H1 (cell line): ENCODE measurements at regions of chr13 and their contacts with region 1.

Region 1: GRCh38 chr13:43908156-43909131 is 28.7 kb downstream of the LACC1 start:
- DNase-seq: no peak
- H3K4me3 ChIP-seq: no peak overlapping the region
- H3K27ac ChIP-seq: no peak overlapping the region
- H3K4me1 ChIP-seq: no peaks in the 10 kb centered on the region
- H3K27me3 ChIP-seq: no peaks in the 10 kb centered on the region
- CTCF ChIP-seq: peak in 2 of 3 experiments; percentile 15 to 29; a peak in 2 of 4 replicates
- EP300 ChIP-seq: no peak
- POLR2A ChIP-seq: no peak
- RAD21 ChIP-seq: peak; percentile 42 to 62

Region 2: DNA sequence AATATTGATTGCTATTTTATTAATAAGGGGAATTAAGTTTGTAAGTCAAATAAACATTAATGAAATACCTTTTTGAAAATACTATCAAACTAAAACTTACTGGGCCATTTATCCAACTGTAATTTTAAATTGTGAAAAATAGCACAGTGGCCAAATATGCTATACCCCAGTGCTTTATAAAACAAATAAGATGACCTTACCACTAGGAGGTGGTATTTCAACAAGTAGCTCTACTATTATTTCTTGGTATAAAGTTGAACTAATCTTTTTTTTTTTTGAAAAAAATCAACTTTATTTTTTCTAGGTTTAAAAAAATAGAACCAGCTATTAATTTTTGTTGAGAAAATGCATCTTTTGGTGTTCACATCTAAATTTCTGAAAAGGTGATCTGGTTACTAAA is 14.0 kb before region 1 on chr13:
- CTCF ChIA-PET with region 1: interaction called, 19 read pairs
- POLR2A ChIA-PET with region 1: no interaction called
- DNase-seq: no peak
- H3K4me3 ChIP-seq: no peak overlapping the region
- H3K27ac ChIP-seq: no peak overlapping the region
- H3K4me1 ChIP-seq: no peaks in the 10 kb centered on the region
- H3K27me3 ChIP-seq: peaks cover 0 to 1% (median 0%) of the 10 kb centered on the region in 4 experiments; a peak in 1 of 7 replicates
- CTCF ChIP-seq: peak in 1 of 3 experiments; percentile 33; a peak in 1 of 4 replicates
- EP300 ChIP-seq: no peak
- POLR2A ChIP-seq: no peak
- RAD21 ChIP-seq: no peak

Region 3: DNA sequence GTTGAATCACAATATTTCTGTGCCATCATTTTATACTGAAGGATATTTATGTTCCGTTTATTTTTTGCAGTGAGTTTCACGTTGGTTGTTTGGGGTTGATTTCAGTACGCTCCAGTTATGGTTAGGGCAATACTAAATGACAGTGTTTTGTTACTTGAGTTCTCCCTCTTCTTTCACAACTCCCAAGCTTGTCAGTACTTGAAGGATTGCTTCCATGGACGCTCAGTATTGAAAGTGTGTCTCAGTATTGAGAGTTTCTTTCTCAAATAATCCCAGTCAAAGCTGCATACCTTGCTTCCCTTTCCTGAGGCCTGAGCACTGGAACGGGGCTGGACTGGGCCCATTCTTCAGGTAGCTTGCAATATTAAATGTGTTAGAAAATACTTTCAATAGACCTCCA is 10.2 kb after region 1 on chr13:
- CTCF ChIA-PET with region 1: interaction called, 11 read pairs
- POLR2A ChIA-PET with region 1: no interaction called
- DNase-seq: no peak
- H3K4me3 ChIP-seq: no peak overlapping the region
- H3K27ac ChIP-seq: no peak overlapping the region
- H3K4me1 ChIP-seq: no peaks in the 10 kb centered on the region
- H3K27me3 ChIP-seq: no peaks in the 10 kb centered on the region
- CTCF ChIP-seq: no peak
- EP300 ChIP-seq: no peak
- POLR2A ChIP-seq: no peak
- RAD21 ChIP-seq: no peak

Region 4: GRCh38 chr13:43981091-43981490 is 72.6 kb after region 1 on chr13:
- CTCF ChIA-PET with region 1: interaction called, 16 read pairs
- POLR2A ChIA-PET with region 1: no interaction called
- DNase-seq: peak; percentile 19 to 72
- H3K4me3 ChIP-seq: no peak overlapping the region
- H3K27ac ChIP-seq: no peak overlapping the region
- H3K4me1 ChIP-seq: peaks cover 0 to 2% (median 0%) of the 10 kb centered on the region in 4 experiments; a peak in 1 of 7 replicates
- H3K27me3 ChIP-seq: no peaks in the 10 kb centered on the region; a peak in 1 of 7 replicates
- CTCF ChIP-seq: peak; percentile 9 to 40 (median 36)
- EP300 ChIP-seq: no peak
- POLR2A ChIP-seq: no peak
- RAD21 ChIP-seq: peak; percentile 52 to 65

Region 5: GRCh38 chr13:44050450-44051063 is 142.1 kb after region 1 on chr13:
- CTCF ChIA-PET with region 1: interaction called, 36 read pairs
- POLR2A ChIA-PET with region 1: no interaction called
- DNase-seq: no peak
- H3K4me3 ChIP-seq: no peak overlapping the region
- H3K27ac ChIP-seq: no peak overlapping the region
- H3K4me1 ChIP-seq: peaks cover 0 to 14% (median 6%) of the 10 kb centered on the region in 4 experiments; a peak in 6 of 7 replicates
- H3K27me3 ChIP-seq: no peaks in the 10 kb centered on the region
- CTCF ChIP-seq: peak in 2 of 3 experiments; percentile 38 to 44; a peak in 2 of 4 replicates
- EP300 ChIP-seq: no peak
- POLR2A ChIP-seq: no peak
- RAD21 ChIP-seq: peak; percentile 64 to 65

Region 6: GRCh38 chr13:44165221-44165907 is 256.9 kb after region 1 on chr13:
- CTCF ChIA-PET with region 1: interaction called, 11 read pairs
- POLR2A ChIA-PET with region 1: no interaction called
- DNase-seq: no peak
- H3K4me3 ChIP-seq: no peak overlapping the region
- H3K27ac ChIP-seq: no peak overlapping the region
- H3K4me1 ChIP-seq: no peaks in the 10 kb centered on the region
- H3K27me3 ChIP-seq: no peaks in the 10 kb centered on the region
- CTCF ChIP-seq: no peak
- EP300 ChIP-seq: no peak
- POLR2A ChIP-seq: no peak
- RAD21 ChIP-seq: no peak

Region 7: GRCh38 chr13:44468874-44469273 is 560.4 kb after region 1 on chr13:
- CTCF ChIA-PET with region 1: interaction called, 10 read pairs
- POLR2A ChIA-PET with region 1: no interaction called
- DNase-seq: no peak
- H3K4me3 ChIP-seq: no peak overlapping the region
- H3K27ac ChIP-seq: no peak overlapping the region
- H3K4me1 ChIP-seq: peaks cover 0 to 9% (median 3%) of the 10 kb centered on the region in 4 experiments; a peak in 3 of 7 replicates
- H3K27me3 ChIP-seq: no peaks in the 10 kb centered on the region
- CTCF ChIP-seq: no peak
- EP300 ChIP-seq: no peak
- POLR2A ChIP-seq: no peak
- RAD21 ChIP-seq: no peak